B cell (primary cell): ENCODE measurements at regions of chr6 and their contacts with region 1.

Region 1: DNA sequence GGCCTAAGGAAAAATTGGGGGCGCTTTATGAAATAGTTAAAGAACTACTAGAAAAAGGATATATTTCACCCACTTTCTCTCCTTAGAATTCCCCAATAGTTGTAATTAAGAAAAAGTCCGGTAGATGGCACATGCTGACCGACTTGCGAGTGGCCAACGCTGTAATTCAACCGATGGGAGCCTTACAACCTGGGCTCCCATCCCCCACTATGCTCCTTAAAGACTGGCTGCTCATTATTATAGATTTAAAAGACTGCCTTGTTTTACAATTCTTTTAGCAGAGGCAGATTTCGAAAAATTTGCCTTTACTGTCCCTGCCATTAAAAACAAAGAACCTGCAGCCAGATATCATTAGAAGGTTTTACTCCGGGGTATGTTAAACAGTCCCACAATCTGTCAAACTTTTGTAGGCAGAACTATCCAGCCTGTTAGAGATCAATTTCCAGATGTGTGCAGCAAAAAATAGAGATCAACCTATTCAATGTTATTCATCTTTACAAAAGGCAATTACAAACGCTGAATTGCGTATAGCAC is 58.5 kb upstream of the PRSS16 start:
- DNase-seq: peak; percentile 84
- ATAC-seq: peak; percentile 90
- H3K4me3 ChIP-seq: peak overlapping the region; percentile 55 to 78 (median 67)
- H3K4me3 Mint-ChIP-seq: peak overlapping the region; percentile 93
- H3K27ac ChIP-seq: peak overlapping the region in 1 of 2 donors; percentile 48
- H3K27ac Mint-ChIP-seq: peak overlapping the region; percentile 32
- H3K4me1 ChIP-seq: peaks cover 6 to 12% of the 10 kb centered on the region in 2 donors
- H3K4me1 Mint-ChIP-seq: peaks cover 8% of the 10 kb centered on the region
- H3K27me3 ChIP-seq: peaks cover 0 to 4% (median 0%) of the 10 kb centered on the region in 4 experiments
- H3K27me3 Mint-ChIP-seq: peaks cover 3% of the 10 kb centered on the region
- CTCF ChIP-seq: peak; percentile 85

Region 2: GRCh38 chr6:26520853-26521599 is 667.9 kb before region 1 on chr6:
- CTCF ChIA-PET with region 1: no interaction called
- POLR2A ChIA-PET with region 1: no interaction called
- intact Hi-C with region 1: no loop called
- DNase-seq: peak; percentile 94
- ATAC-seq: peak; percentile 64
- H3K4me3 ChIP-seq: peak overlapping the region; percentile 60 to 95 (median 74)
- H3K4me3 Mint-ChIP-seq: peak overlapping the region; percentile 84
- H3K27ac ChIP-seq: peak overlapping the region; percentile 85 to 94
- H3K27ac Mint-ChIP-seq: peak overlapping the region; percentile 91
- H3K4me1 ChIP-seq: peaks cover 17 to 20% of the 10 kb centered on the region in 2 donors
- H3K4me1 Mint-ChIP-seq: peaks cover 33% of the 10 kb centered on the region
- H3K27me3 ChIP-seq: no peaks in the 10 kb centered on the region
- H3K27me3 Mint-ChIP-seq: no peaks in the 10 kb centered on the region
- CTCF ChIP-seq: no peak

Region 3: GRCh38 chr6:27126815-27127537 is 62.0 kb before region 1 on chr6:
- CTCF ChIA-PET with region 1: interaction called, 4 read pairs
- POLR2A ChIA-PET with region 1: no interaction called
- intact Hi-C with region 1: loop called (anchors 2 kb)
- DNase-seq: peak; percentile 93
- ATAC-seq: peak; percentile 76
- H3K4me3 ChIP-seq: peak overlapping the region; percentile 5 to 56 (median 40)
- H3K4me3 Mint-ChIP-seq: peak overlapping the region; percentile 87
- H3K27ac ChIP-seq: peak overlapping the region in 1 of 2 donors; percentile 56
- H3K27ac Mint-ChIP-seq: peak overlapping the region; percentile 85
- H3K4me1 ChIP-seq: peaks cover 13 to 18% of the 10 kb centered on the region in 2 donors
- H3K4me1 Mint-ChIP-seq: peaks cover 20% of the 10 kb centered on the region
- H3K27me3 ChIP-seq: no peaks in the 10 kb centered on the region
- H3K27me3 Mint-ChIP-seq: no peaks in the 10 kb centered on the region
- CTCF ChIP-seq: peak; percentile 92

Region 4: DNA sequence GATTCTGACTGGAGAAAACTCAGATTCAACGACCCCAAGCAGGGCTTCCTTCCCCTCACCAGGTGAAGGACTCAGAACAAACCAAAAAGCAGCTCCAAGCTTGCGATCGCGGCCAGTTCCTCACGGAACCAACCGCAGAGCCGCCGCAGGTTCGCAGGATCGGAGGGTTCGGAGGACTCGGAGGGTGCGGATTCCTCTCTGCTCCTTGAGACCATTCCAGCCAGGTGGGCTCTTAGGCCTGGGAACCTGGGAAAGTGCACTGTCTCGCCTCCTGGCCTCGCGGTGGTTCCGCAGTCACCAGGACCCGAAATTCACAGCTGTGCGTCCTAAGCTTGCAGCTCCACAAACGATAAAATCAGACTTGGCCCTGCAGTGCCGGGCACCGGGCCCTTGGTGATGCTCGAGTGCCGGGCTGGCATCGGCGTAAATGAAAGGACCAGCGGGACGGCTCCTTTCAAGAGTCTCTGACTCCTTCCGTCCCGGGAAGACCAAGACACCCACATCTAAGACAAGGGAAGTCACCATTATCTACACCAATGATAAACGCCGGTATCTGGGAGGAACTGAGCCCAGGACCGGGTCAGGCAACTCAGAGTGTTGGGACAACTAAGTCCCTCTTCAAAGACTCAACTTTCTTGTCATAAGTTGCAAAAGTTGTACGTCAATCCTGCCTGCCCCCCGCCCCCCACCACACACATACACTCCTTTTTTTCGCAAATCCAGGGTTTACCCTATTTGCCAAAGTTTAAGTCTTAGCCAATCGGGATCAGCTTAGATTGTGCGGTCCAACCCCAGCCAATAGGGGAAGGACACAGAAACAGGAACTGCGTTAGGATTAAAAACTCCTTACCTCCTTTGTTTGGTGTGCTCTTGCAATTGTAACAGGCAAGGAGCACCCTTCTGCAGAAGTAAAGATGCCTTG is 11.2 kb before region 1 on chr6:
- CTCF ChIA-PET with region 1: interaction called, 13 read pairs
- POLR2A ChIA-PET with region 1: interaction called, 3 read pairs
- intact Hi-C with region 1: loop called (anchors 1 kb)
- DNase-seq: peak; percentile 90
- ATAC-seq: peak; percentile 86
- H3K4me3 ChIP-seq: peak overlapping the region; percentile 88 to 100 (median 98)
- H3K4me3 Mint-ChIP-seq: peak overlapping the region; percentile 96
- H3K27ac ChIP-seq: peak overlapping the region; percentile 34 to 78
- H3K27ac Mint-ChIP-seq: peak overlapping the region; percentile 91
- H3K4me1 ChIP-seq: peaks cover 0 to 7% of the 10 kb centered on the region in 2 donors
- H3K4me1 Mint-ChIP-seq: peaks cover 15% of the 10 kb centered on the region
- H3K27me3 ChIP-seq: no peaks in the 10 kb centered on the region
- H3K27me3 Mint-ChIP-seq: no peaks in the 10 kb centered on the region
- CTCF ChIP-seq: peak; percentile 71

Region 5: DNA sequence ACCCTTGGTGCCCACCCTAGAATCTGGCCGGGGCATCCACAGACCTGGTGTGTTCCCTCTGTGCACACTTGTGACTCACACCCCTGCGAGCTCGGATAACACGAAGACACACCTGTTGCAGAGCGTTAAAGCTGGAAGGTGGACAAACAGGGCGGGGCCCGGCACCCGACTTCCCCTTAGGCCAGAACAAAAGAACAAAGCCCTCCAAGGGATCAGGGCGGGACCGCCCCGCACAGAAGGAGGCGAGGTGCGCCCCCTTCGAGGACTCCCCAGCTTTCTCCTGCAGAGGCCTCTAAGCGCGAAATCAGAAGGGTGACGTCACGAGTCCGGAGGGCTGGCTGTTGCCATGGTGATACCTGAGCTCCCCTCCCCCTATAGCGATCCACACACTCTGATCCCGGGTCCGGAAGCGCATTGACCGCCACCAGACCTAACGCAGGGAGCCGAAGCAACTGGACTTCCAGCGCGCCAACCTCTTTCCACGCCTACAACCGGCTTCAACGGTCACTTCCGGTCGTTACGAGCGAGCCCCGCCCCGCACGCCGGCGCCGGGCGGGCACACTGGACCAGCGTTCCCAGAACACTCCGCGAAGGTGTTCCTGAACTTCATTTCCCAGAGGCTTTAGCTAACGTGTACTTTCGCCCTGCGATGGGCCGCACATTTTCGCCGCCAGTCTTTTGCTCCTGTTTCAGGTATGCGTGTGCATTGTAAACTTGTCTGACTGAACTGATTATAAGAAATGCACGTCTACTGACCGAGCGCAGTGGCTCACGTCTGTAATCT is 283.9 kb after region 1 on chr6 and contains the start of gene ZNF184:
- CTCF ChIA-PET with region 1: no interaction called
- POLR2A ChIA-PET with region 1: no interaction called
- intact Hi-C with region 1: loop called (anchors 5 kb)
- DNase-seq: peak; percentile 96
- ATAC-seq: peak; percentile 92
- H3K4me3 ChIP-seq: peak within 1 kb of the TSS; percentile 75 to 93 (median 83)
- H3K4me3 Mint-ChIP-seq: peak within 1 kb of the TSS; percentile 100
- H3K27ac ChIP-seq: peak within 1 kb of the TSS; percentile 89 to 97
- H3K27ac Mint-ChIP-seq: peak within 1 kb of the TSS; percentile 99
- H3K4me1 ChIP-seq: peaks cover 16 to 22% of the 10 kb centered on the region in 2 donors
- H3K4me1 Mint-ChIP-seq: peaks cover 44% of the 10 kb centered on the region
- H3K27me3 ChIP-seq: no peaks in the 10 kb centered on the region
- H3K27me3 Mint-ChIP-seq: no peaks in the 10 kb centered on the region
- CTCF ChIP-seq: peak; percentile 31
- total RNA-seq, gene ZNF184: 11.8 TPM in 2 replicates

Region 6: DNA sequence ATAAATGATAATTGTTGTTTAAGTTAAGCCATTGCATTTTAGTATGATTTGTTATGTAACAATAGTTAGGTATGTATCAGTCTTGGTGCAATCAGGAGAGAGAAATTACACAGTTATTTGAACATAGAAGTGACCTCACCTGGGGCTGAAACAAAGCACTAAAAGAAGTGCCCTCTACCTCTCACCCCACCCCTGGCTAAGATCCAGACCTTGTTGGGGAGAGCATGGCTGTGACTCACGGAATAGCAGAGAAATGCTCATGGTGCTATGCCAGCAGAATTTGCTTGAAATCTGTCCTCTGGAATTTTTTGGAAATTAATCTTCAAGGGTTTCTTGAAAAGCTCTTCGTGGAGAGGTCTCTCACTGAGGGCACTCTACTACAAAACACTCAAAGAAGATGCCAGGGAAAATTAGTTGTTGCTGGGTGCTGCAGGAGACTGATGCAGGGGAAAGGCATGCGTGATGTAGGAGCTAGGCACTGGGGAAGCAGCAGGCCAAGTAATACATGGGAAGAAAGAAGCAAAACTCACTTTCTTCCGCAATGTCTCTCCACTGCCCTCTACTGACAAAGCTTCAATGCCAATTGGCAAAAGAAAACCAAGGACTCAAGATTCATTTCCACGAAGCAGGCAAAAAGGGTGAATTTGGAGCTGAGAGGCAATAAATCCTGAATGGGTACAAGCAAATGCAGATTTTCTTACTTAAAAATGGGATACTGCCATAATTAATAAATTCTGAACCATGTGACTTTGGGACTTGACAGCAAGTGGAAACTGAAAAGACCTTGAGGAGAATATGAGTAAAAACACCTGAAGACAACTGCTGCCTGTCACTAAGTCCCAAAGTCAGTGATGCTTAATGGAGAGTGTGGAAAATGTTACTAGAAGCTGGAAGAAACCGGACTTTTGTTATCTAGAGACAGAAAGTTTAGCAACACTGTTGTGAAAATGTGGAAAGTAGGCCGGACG is 420.2 kb after region 1 on chr6:
- CTCF ChIA-PET with region 1: no interaction called
- POLR2A ChIA-PET with region 1: no interaction called
- intact Hi-C with region 1: loop called (anchors 1 kb)
- DNase-seq: peak; percentile 42
- ATAC-seq: no peak
- H3K4me3 ChIP-seq: no peak overlapping the region
- H3K4me3 Mint-ChIP-seq: no peak overlapping the region
- H3K27ac ChIP-seq: no peak overlapping the region
- H3K27ac Mint-ChIP-seq: no peak overlapping the region
- H3K4me1 ChIP-seq: peaks cover 0 to 6% of the 10 kb centered on the region in 2 donors
- H3K4me1 Mint-ChIP-seq: peaks cover 9% of the 10 kb centered on the region
- H3K27me3 ChIP-seq: peaks cover 0 to 32% (median 21%) of the 10 kb centered on the region in 4 experiments
- H3K27me3 Mint-ChIP-seq: peaks cover 50% of the 10 kb centered on the region
- CTCF ChIP-seq: peak; percentile 53

Region 7: GRCh38 chr6:27795697-27796494 is 606.9 kb after region 1 on chr6:
- CTCF ChIA-PET with region 1: interaction called, 16 read pairs
- POLR2A ChIA-PET with region 1: no interaction called
- intact Hi-C with region 1: no loop called
- DNase-seq: peak; percentile 89
- ATAC-seq: peak; percentile 59
- H3K4me3 ChIP-seq: no peak overlapping the region
- H3K4me3 Mint-ChIP-seq: no peak overlapping the region
- H3K27ac ChIP-seq: no peak overlapping the region
- H3K27ac Mint-ChIP-seq: peak overlapping the region; percentile 17
- H3K4me1 ChIP-seq: peaks cover 19 to 25% of the 10 kb centered on the region in 2 donors
- H3K4me1 Mint-ChIP-seq: peaks cover 22% of the 10 kb centered on the region
- H3K27me3 ChIP-seq: peaks cover 0 to 10% (median 5%) of the 10 kb centered on the region in 4 experiments
- H3K27me3 Mint-ChIP-seq: peaks cover 12% of the 10 kb centered on the region
- CTCF ChIP-seq: peak; percentile 84